ENCODE measurements at regions of chr3 and their contacts with region 1.

Region 1: DNA sequence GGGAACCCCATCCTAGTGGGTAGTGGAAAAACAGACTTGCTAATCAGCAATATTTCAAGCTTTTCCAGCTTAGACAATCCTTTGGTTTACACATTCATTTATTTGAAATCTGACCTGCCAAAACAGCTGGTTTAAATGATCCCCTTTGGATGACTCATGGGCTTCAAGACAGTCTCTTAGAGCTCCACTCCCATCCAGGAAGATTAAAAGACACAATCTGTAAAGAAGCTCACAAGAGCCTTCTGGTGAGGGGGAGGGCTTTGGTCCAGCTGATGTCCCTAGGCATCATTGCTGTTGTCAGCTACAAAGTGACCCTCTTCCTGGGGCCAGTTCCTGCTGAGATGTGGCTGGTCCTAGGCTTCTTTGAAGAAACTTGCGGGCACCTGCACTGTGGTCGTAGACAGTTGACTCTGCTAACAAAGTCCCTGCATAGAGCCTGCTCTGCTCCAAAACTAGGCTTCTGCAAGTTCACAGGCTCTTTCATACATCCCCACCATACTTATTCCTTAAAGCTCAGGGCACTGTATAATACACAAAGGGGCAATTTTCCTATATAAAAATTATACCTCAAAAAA is 73.7 kb downstream of the IGSF11 start:
- DNase-seq: no peak
- ATAC-seq: no peak
- H3K4me3 ChIP-seq: no peak overlapping the region
- H3K27ac ChIP-seq: no peak overlapping the region
- H3K4me1 ChIP-seq: no peaks in the 10 kb centered on the region
- H3K27me3 ChIP-seq: 0 out of 2 replicates have a peak, but pooled peaks cover 2% of the 10 kb centered on the region
- CTCF ChIP-seq: no peak

Region 2: DNA sequence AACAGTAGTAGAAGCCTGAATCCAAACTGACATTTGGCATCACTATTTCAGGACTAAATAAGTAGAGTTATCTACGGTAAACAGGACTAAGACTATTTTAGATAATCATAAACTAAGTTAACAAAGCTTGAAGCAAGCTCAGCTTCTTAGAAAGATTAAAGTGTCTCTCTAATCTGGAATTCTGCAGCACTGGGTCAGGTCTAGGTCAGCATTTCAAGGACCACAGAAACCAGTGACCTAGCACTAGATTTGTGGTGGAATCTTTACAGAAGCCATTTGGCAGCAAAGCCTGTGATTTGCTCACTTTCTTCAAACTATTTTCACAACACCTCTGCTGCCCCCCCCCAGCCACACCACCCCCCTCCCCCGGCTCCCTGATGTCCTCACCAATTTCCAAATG is 36.2 kb after region 1 on chr3:
- CTCF ChIA-PET with region 1: interaction called, 18 read pairs
- POLR2A ChIA-PET with region 1: no interaction called
- in situ Hi-C with region 1: no loop called
- intact Hi-C with region 1: no loop called
- DNase-seq: no peak
- ATAC-seq: no peak
- H3K4me3 ChIP-seq: no peak overlapping the region
- H3K27ac ChIP-seq: no peak overlapping the region
- H3K4me1 ChIP-seq: no peaks in the 10 kb centered on the region
- H3K27me3 ChIP-seq: peaks cover 2% of the 10 kb centered on the region; the same call in 1 of the 2 replicates
- CTCF ChIP-seq: no peak

Measured in Panc1 (cell line).